ENCODE measurements at regions of chr7 and their contacts with region 1.

Region 1: GRCh38 chr7:142782922-142783900 is 12.4 kb downstream of the PRSS2 start:
- DNase-seq: peak; percentile 84
- CTCF ChIP-seq: peak; percentile 96

Region 2: DNA sequence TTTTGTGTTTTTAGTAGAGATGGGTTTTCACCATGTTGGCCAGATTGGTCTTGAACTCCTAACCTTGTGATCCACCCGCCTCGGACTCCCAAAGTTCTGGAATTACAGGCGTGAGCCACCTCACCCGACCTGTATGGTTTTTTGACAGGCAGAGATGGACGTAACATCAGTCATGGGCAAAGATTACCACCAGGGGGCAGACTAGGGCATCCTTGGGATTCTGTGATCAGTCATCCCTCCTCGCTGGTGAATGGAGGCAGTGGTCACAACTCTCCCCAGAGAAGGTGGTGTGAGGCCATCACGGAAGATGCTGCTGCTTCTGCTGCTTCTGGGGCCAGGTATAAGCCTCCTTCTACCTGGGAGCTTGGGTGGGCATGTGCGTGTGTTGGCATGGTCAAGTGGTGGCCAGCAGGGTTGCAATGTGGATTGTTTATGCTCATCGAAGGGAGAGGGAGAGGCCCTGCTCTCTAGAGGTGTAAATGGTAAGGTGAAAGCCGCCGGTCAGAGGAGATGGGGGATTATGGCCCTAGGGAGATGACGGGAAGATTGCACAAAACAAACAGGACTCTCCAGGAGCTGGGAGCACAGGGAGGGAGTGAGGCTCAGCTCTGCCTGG is 156.7 kb before region 1 on chr7:
- CTCF ChIA-PET with region 1: interaction called, 214 read pairs
- POLR2A ChIA-PET with region 1: no interaction called
- DNase-seq: peak; percentile 49
- CTCF ChIP-seq: peak; percentile 61

Region 3: DNA sequence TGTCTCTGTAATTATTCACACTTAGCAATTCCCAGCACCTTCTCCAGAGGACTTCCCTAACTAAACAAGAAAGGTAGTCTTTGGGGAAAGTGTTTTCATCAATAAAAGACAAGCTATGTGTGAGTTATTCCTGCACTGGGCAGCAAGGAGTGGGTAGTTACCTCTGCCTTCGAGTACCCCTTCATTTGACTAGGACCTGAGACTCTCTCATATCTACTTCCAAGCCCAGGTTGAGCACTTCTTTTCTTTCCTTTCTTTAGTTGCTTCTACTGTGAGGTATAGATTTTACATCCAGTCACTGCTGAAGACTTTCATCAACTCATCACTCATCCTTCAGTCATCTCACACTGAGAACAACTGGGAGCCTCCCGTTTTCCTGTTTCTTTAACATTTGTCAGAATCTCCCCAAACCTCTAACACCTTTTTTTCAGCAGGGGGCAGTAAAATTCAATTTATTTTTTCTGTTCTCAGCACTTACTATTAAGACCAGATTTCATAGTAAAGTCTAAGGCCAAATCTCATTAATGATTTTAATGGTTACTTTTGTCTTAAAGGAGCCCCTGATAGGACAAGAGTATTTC is 114.0 kb before region 1 on chr7:
- CTCF ChIA-PET with region 1: interaction called, 34 read pairs
- POLR2A ChIA-PET with region 1: no interaction called
- DNase-seq: no peak
- CTCF ChIP-seq: peak; percentile 23

Region 4: GRCh38 chr7:142739923-142740492 is 43.2 kb before region 1 on chr7:
- CTCF ChIA-PET with region 1: interaction called, 10 read pairs
- POLR2A ChIA-PET with region 1: no interaction called
- DNase-seq: no peak
- CTCF ChIP-seq: peak; percentile 12

Region 5: DNA sequence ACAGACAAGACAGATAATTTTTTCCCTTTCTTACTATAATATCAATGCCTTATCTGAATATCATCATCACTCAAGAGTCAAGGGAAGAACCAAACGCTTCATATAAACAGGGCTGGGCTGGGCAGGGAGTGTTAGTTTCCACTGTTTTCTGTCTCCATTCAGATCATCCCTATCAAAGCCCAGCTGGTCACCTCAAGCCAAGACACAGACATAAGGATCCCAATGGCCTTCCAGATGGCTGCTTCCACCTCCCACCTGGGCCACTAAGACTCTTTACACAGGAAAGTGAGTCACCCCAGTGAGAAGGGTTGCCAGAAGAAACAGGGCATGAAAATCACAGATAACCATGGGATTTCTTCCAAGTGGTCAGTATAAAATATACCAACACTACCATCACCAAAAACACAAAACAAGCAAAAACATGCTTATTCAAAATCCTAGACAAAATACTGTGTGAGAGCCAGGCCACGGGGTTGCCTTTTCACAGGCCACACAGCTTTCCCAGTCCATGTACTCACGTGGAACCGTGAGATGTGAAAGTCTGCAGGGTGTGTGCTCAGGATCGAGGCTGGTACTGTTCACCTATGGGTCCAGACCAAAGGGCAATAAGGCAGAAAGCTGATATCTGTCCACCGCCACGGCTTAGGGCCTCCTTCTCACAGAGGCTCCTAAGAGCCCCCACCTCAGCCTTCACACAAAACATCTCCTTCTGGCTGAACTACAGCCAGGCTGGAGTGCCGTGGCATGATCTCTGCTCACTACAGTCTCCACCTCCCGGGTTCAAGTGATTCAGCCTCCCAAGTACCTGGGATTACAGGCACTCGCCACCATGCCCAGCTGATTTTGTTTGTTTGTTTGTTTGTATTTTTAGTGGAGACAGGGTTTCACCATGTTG is 28.3 kb before region 1 on chr7:
- CTCF ChIA-PET with region 1: interaction called, 10 read pairs
- POLR2A ChIA-PET with region 1: no interaction called
- DNase-seq: no peak
- CTCF ChIP-seq: no peak

Region 6: GRCh38 chr7:142796608-142797385 is 13.6 kb after region 1 on chr7:
- CTCF ChIA-PET with region 1: interaction called, 140 read pairs
- POLR2A ChIA-PET with region 1: no interaction called
- DNase-seq: peak; percentile 43
- CTCF ChIP-seq: no peak